PC-3 (cell line): ENCODE measurements at regions of chr9 and their contacts with region 1.

Region 1: GRCh38 chr9:77521091-77521490 is 127.0 kb downstream of the GNA14 start:
- DNase-seq: no peak
- ATAC-seq: no peak
- H3K4me3 ChIP-seq: no peak overlapping the region
- H3K27ac ChIP-seq: no peak overlapping the region
- H3K4me1 ChIP-seq: peaks cover 23% of the 10 kb centered on the region
- H3K27me3 ChIP-seq: no peaks in the 10 kb centered on the region
- CTCF ChIP-seq: no peak

Region 2: DNA sequence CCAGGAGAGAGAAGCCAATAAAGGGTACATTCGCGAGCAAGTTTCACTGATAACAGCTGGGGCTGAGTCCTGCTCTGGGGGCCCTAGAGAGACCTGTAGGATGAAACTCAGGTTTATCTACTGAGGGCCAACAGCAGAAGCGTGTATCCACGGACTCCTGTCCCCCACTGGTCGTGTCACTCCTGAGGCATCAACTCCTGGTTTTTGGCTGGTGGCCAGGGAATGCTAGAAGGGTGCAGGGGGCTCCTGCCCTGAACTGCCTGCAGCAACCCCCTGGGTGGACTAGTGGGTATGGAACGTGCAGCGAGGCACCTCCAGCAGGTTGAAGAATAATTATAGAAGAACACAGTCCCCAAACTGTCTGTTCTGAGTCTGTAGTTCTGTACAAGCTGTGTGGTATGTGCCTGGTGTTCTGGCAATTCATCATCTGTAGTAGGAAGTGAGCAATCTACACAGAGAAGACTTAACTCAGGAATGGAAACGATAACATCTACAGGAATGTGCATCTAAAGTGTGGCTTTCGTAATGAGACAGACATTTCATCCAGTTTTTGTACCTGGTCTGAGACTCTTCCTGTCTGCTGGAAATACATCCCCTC is 191.5 kb after region 1 on chr9:
- CTCF ChIA-PET with region 1: no interaction called
- POLR2A ChIA-PET with region 1: no interaction called
- intact Hi-C with region 1: loop called (anchors 5 kb)
- DNase-seq: peak; percentile 67
- ATAC-seq: peak; percentile 88
- H3K4me3 ChIP-seq: no peak overlapping the region
- H3K27ac ChIP-seq: no peak overlapping the region
- H3K4me1 ChIP-seq: peaks cover 46% of the 10 kb centered on the region
- H3K27me3 ChIP-seq: no peaks in the 10 kb centered on the region
- CTCF ChIP-seq: no peak